IMR-90 (cell line): ENCODE measurements at regions of chr7 and their contacts with region 1.

Region 1: DNA sequence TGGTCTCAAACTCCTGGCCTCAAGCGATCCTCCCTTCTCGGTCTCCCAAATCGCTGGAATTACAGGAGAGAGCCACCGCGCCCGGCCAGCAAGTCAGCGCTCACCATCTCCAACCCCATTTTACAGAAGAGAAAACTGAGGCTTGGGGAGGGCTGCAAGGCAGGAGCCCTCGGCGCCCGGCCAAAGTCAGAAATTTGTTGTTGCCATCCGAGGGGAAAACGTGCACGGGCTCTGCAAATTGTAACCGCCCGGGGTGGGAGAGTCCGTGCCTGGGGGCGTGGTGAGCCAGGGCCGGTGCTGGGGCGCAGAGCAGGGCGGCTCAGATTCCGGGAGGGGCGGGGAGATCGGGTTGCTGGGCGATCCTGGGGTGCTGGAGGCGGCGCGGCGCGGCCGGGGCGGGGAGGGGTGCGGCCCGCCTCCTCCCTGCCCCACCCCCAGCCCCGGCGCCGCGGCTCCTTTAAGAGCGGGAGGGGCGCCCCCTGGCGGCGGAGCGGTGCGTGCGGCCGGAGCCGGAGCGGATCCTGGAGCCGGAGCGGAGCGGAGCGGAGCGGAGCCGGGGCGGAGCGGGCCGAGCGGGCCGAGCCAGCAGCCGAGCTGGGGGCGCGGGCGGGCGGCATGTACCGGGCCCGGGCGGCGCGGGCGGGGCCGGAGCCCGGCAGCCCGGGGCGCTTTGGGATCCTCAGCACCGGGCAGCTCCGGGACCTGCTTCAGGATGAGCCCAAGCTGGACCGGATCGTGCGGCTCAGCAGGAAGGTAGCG is at the start of gene VPS37D:
- DNase-seq: peak; percentile 80
- ATAC-seq: peak; percentile 96
- H3K4me3 ChIP-seq: peak within 1 kb of the TSS; percentile 84
- H3K27ac ChIP-seq: peak within 1 kb of the TSS; percentile 14
- H3K4me1 ChIP-seq: no peaks in the 10 kb centered on the region; the same call in 1 of the 2 replicates
- H3K27me3 ChIP-seq: peaks cover 3% of the 10 kb centered on the region
- CTCF ChIP-seq: peak; percentile 98
- POLR2A ChIP-seq: no peak
- RAD21 ChIP-seq: peak; percentile 66
- total RNA-seq, gene VPS37D: 2.3 and 2.8 TPM in 2 replicates

Region 2: DNA sequence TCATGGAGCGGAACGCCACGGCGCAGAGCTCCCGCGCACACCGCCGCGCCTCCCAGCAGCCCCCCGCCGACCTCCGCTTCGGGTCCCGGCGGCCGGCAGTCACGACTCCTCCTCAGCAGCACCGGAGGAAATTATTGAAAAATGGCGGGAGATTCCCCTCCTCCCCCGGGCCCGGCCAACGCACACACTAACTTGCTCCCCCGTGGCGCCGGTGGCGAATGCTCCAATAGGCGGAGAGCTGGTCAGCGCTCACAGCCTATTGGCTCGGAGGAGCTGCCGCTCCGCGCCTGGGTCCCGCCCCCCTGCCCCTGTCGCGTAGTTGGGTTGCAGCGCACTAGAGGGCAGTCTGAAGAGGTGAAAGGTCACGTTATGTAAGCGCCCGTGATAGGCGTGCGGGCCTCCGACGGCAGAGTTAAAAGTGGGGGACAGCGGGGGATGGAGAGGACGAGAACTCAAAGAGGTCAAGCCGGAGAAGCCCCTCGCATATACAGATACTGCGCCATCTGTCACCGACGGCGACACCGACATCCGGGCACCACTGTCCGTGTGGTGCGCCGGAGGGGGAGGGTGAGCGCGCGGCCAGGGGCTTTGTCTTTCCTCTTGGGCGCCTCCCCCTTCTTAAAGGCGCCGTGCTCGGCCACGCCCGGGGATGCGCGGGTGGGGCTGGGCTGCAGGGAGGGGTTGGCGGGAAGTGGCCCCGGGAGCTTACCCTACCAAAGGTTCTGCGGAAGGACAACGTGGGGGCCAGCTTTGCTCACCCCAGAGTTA is 145.2 kb before region 1 on chr7 and contains the start of gene BAZ1B:
- CTCF ChIA-PET with region 1: no interaction called
- POLR2A ChIA-PET with region 1: no interaction called
- dilution Hi-C with region 1: no loop called
- in situ Hi-C with region 1: no loop called
- intact Hi-C with region 1: loop called (anchors 5 kb)
- DNase-seq: peak; percentile 97
- ATAC-seq: peak; percentile 95
- H3K4me3 ChIP-seq: peak within 1 kb of the TSS; percentile 60
- H3K27ac ChIP-seq: peak within 1 kb of the TSS; percentile 98
- H3K4me1 ChIP-seq: peaks cover 6% of the 10 kb centered on the region
- H3K27me3 ChIP-seq: no peaks in the 10 kb centered on the region
- CTCF ChIP-seq: no peak
- POLR2A ChIP-seq: no peak
- RAD21 ChIP-seq: no peak
- total RNA-seq, gene BAZ1B: 45.0 and 60.8 TPM in 2 replicates

Region 3: DNA sequence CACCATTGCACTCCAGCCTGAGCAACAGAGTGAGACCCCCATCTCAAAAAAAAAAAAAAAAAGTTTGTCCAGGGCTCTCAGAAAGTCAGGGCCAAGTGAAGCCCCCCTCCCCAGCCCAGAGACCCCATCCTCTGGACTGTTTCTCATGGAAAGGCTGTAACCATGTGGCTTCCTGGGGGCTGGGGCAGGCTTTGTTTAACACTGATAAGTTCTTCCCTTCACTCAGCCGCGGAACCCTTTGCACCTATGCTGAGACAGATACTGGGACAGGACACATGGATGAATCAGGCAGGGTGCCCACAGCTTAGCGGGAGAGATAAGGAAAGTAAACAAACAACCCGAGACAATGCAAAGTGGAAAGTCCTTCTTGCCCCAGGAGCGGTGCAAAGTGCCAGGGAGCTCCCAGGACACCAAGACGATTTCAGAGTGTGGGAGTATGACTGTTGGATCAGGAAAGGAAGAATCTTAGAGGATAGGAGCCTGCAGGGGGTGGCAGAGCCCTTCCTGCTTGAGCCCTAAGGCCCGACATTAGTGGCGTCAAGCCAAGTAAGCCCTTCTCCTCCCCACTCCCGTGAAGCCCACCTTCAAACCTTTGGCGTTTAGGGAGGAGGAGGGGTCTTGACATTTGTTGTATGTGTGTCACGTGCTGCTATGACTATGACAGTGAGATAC is 54.8 kb before region 1 on chr7:
- CTCF ChIA-PET with region 1: interaction called, 3 read pairs
- POLR2A ChIA-PET with region 1: no interaction called
- dilution Hi-C with region 1: no loop called
- in situ Hi-C with region 1: no loop called
- intact Hi-C with region 1: loop called (anchors 2 kb)
- DNase-seq: peak; percentile 29
- ATAC-seq: peak; percentile 87
- H3K4me3 ChIP-seq: no peak overlapping the region
- H3K27ac ChIP-seq: no peak overlapping the region
- H3K4me1 ChIP-seq: no peaks in the 10 kb centered on the region
- H3K27me3 ChIP-seq: peaks cover 17% of the 10 kb centered on the region
- CTCF ChIP-seq: peak; percentile 44
- POLR2A ChIP-seq: no peak
- RAD21 ChIP-seq: peak; percentile 49; the same call in 1 of the 2 replicates

Region 4: DNA sequence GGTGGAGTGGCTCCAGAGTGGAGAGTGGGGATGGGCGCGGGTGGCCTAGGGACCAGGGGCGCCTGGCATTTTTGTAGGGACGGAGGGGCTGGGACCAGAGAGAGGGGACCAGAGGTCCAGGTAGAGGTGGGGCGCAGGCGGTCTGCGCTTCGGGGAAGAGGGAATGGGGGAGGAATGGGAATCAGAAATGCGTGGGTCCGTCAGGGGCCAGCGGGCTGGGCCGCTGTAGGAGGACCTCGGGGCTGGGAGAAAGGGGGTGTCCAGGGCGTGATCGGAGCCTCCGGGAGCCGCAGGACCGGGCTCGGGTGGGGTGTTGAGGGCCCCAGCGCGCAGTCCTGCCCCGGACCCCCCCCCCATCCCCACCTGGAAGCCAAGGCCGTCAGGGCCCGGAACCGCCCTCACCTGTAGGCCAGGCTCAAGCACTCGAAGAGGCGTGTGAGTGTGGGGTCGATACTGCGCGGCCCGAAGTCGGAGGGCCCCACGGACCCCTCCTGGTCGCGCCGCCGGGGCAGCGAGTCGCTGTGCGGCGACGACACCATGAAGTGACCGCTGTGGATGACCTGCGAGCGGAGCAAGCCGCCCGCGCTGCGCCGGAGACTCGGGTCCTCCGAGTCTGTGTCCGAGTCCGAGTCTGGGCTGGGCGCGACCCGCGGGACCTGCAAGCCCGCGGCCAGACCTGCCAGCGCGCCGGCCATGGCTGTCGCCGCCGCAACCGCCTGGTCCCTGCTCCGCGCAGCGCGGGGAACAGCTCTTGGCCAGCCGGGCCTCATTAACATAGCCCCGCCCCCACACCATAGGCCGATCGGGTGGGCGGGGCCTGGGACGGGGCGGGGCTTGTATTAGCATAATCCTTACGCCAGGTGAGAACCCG is 43.5 kb before region 1 on chr7 and contains the start of gene MLXIPL:
- CTCF ChIA-PET with region 1: no interaction called
- POLR2A ChIA-PET with region 1: no interaction called
- dilution Hi-C with region 1: no loop called
- in situ Hi-C with region 1: no loop called
- intact Hi-C with region 1: loop called (anchors 5 kb)
- DNase-seq: no peak
- ATAC-seq: peak; percentile 95
- H3K4me3 ChIP-seq: peak within 1 kb of the TSS; percentile 46
- H3K27ac ChIP-seq: no peak within 1 kb of the TSS
- H3K4me1 ChIP-seq: peaks cover 5% of the 10 kb centered on the region; the same call in 1 of the 2 replicates
- H3K27me3 ChIP-seq: peaks cover 71% of the 10 kb centered on the region
- CTCF ChIP-seq: no peak
- POLR2A ChIP-seq: no peak
- RAD21 ChIP-seq: no peak
- total RNA-seq, gene MLXIPL: not detected in 2 replicates

Region 5: GRCh38 chr7:73683056-73683964 is 15.8 kb after region 1 on chr7 and contains the starts of genes BUD23 and DNAJC30:
- CTCF ChIA-PET with region 1: no interaction called
- POLR2A ChIA-PET with region 1: interaction called, 13 read pairs
- dilution Hi-C with region 1: no loop called
- in situ Hi-C with region 1: no loop called
- intact Hi-C with region 1: no loop called
- DNase-seq: peak; percentile 95
- ATAC-seq: peak; percentile 98
- H3K4me3 ChIP-seq: peak within 1 kb of the TSS; percentile 96
- H3K27ac ChIP-seq: peak within 1 kb of the TSS; percentile 93
- H3K4me1 ChIP-seq: peaks cover 13% of the 10 kb centered on the region
- H3K27me3 ChIP-seq: no peaks in the 10 kb centered on the region
- CTCF ChIP-seq: no peak
- POLR2A ChIP-seq: peak; percentile 93
- RAD21 ChIP-seq: no peak
- total RNA-seq, gene BUD23: 35.7 and 40.8 TPM in 2 replicates
- total RNA-seq, gene DNAJC30: 1.6 and 1.7 TPM in 2 replicates

Region 6: DNA sequence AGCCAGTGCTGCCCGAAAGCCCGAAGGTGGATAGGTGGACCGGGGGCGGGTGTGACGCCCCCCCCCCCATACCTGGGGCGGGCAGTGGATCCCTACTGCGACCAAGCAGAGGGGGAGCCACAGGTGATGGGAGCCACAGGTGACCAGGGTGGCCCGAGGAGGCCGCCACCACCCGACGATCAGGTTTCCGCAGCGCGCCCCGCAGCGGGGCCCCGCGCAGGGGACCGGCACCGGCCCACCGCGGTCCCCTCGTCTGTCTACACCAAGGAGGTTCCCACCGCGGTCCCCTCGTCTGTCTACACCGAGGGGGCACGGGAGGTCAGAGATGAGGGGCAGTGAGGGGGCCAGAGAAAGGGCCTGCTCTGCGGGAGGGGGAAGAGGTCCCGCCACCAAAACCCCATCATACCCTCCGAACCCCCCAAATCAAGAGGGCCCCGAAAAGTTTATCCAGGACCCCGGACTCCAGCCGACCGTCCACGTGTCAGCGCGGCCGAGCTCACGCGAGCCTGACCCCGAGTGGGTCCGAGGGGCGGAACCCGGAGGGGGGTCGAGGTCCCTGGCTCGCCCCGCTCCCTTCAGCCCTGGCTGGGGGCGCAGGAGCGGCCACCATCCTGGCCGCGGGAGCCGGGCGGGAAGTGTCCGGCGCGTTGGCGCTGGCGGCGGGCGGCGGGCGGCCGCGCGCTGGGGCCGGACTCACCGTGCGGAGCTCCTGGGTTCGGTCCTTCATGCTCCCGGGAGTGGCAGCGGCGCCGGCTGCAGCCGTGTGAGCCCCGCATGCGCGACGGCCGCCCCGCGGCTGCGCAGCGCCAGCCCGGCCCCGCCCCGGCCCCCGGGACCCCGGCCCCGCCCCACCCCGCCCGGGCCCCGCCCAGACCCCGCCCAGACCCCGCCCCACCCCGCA is 51.6 kb after region 1 on chr7 and contains the start of gene STX1A:
- CTCF ChIA-PET with region 1: no interaction called
- POLR2A ChIA-PET with region 1: no interaction called
- dilution Hi-C with region 1: no loop called
- in situ Hi-C with region 1: no loop called
- intact Hi-C with region 1: loop called (anchors 5 kb)
- DNase-seq: peak; percentile 59
- ATAC-seq: peak; percentile 84
- H3K4me3 ChIP-seq: peak within 1 kb of the TSS; percentile 65
- H3K27ac ChIP-seq: peak within 1 kb of the TSS; percentile 47; the same call in 1 of the 2 replicates
- H3K4me1 ChIP-seq: peaks cover 28% of the 10 kb centered on the region
- H3K27me3 ChIP-seq: no peaks in the 10 kb centered on the region
- CTCF ChIP-seq: no peak
- POLR2A ChIP-seq: peak; percentile 77
- RAD21 ChIP-seq: no peak
- total RNA-seq, gene STX1A: 9.3 and 10.0 TPM in 2 replicates